Ascending aorta (tissue), 2 donors: ENCODE measurements at regions of chr9 and their contacts with region 1.

Region 1: GRCh38 chr9:4984621-4985385 is at the start of gene JAK2:
- DNase-seq: peak; percentile 77 to 96
- H3K4me3 ChIP-seq: peak within 1 kb of the TSS; percentile 73 to 83
- H3K27ac ChIP-seq: peak within 1 kb of the TSS; percentile 96 to 97
- H3K4me1 ChIP-seq: peaks cover 4 to 37% of the 10 kb centered on the region in 2 donors
- H3K27me3 ChIP-seq: no peaks in the 10 kb centered on the region
- CTCF ChIP-seq: peak in 2 of 3 experiments; percentile 29 to 41
- total RNA-seq, gene JAK2: 31.9 TPM

Region 2: DNA sequence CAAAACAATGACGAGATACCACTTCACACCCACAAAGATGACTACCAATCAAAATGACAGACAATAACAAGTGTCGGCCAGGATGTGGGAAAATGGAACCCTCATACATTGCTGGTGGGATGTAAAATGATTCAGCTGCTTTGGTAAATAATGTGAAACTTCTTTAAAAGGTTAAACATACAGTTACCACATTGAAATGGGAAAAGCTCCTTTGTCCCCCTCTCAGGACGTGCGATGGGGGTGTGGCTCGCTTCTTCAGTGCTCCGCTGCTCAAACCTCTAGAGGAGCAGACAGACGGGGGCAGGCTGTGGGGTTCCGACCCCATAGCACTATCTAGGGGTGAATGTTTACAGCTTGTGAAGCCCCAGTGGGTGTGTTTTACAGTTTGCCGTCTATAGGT is 330.7 kb before region 1 on chr9:
- intact Hi-C with region 1: no loop called
- DNase-seq: no peak
- H3K4me3 ChIP-seq: no peak overlapping the region
- H3K27ac ChIP-seq: no peak overlapping the region
- H3K4me1 ChIP-seq: no peaks in the 10 kb centered on the region
- H3K27me3 ChIP-seq: no peaks in the 10 kb centered on the region
- CTCF ChIP-seq: no peak

Region 3: DNA sequence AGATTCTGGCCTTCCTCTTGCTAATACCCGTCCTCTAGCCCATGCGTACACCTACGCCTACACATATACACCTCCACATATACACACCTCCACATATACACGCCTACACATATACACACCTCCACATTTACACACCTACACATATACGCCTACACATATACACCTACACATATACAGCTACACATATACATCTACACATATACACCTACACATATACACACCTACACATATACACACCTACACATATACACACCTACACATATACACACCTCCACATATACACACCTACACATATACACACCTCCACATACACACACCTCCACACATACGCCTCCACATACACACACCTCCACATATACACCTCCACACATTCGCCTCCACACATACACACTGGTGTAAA is 271.0 kb before region 1 on chr9:
- intact Hi-C with region 1: no loop called
- DNase-seq: no peak
- H3K4me3 ChIP-seq: no peak overlapping the region
- H3K27ac ChIP-seq: no peak overlapping the region
- H3K4me1 ChIP-seq: no peaks in the 10 kb centered on the region
- H3K27me3 ChIP-seq: no peaks in the 10 kb centered on the region
- CTCF ChIP-seq: no peak

Region 4: GRCh38 chr9:4762108-4762885 is 222.5 kb before region 1 on chr9:
- intact Hi-C with region 1: loop called (anchors 1 kb)
- DNase-seq: peak in 1 of 2 donors; percentile 86
- H3K4me3 ChIP-seq: peak overlapping the region; percentile 37 to 38
- H3K27ac ChIP-seq: peak overlapping the region; percentile 9 to 36
- H3K4me1 ChIP-seq: peaks cover 0 to 2% of the 10 kb centered on the region in 2 donors
- H3K27me3 ChIP-seq: no peaks in the 10 kb centered on the region
- CTCF ChIP-seq: peak; percentile 72 to 78 (median 78)

Region 5: DNA sequence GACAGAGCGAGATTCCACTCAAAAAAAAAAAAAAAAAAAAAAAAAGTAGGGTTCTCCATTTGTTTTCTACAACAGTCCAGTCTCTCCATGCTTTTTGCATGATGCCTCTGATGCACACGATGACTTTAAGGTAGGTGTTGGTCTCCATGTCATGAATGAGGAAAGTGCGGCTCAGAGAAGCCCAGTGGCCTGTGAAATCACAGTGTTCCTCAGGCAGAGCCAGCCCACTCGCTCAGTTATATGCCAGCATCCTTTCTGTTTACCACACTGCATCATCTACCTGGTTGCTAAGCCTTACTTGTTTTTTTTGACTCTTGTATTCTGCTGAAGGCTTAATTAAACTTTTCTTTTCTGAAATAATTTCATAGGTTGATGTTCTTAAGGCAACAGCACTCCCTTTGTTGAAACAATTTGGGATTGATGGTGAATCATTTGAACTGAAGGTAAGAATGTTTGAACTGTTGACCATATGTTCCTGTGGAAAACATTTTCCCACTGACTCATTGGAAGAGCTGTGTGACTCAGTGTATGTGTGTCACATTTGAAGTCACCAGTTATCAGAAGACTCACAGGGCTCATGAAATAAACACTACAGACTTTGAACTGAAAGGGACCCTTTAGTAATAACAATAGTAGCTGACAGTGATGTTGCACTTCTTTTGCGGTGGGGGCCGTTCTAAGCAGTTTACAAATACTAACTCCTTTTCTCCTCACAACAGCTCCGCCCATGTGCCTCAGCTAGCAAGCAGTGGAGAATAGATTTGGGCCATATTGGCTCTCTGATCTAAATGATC is 151.8 kb before region 1 on chr9:
- intact Hi-C with region 1: loop called (anchors 5 kb)
- DNase-seq: no peak
- H3K4me3 ChIP-seq: no peak overlapping the region
- H3K27ac ChIP-seq: peak overlapping the region in 1 of 2 donors; percentile 19
- H3K4me1 ChIP-seq: peaks cover 4 to 26% of the 10 kb centered on the region in 2 donors
- H3K27me3 ChIP-seq: no peaks in the 10 kb centered on the region
- CTCF ChIP-seq: no peak

Region 6: DNA sequence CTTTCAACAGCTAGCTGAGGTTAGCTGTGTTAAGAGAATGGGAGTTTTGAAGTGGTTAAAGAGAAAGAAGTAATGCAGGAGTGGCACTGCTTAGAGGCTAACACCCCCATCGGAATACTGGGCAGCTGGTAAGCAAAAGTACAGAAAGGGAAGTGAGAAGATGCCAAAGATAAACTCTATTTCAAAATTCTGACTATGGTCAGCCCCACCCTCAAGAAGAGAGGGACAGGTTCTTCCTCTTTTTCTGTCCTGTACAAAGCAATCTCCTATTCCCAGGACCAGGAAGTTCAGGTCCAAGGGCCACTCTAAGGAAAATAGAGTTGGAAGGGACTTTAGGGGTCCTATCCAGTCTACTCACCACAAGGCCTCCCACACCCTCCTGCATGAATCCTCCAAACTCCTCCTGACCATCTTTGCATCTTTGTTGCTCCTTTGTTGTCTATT is 45.7 kb before region 1 on chr9:
- intact Hi-C with region 1: loop called (anchors 1 kb)
- DNase-seq: no peak
- H3K4me3 ChIP-seq: no peak overlapping the region
- H3K27ac ChIP-seq: peak overlapping the region; percentile 61 to 65
- H3K4me1 ChIP-seq: peaks cover 4 to 36% of the 10 kb centered on the region in 2 donors
- H3K27me3 ChIP-seq: no peaks in the 10 kb centered on the region
- CTCF ChIP-seq: no peak

Region 7: DNA sequence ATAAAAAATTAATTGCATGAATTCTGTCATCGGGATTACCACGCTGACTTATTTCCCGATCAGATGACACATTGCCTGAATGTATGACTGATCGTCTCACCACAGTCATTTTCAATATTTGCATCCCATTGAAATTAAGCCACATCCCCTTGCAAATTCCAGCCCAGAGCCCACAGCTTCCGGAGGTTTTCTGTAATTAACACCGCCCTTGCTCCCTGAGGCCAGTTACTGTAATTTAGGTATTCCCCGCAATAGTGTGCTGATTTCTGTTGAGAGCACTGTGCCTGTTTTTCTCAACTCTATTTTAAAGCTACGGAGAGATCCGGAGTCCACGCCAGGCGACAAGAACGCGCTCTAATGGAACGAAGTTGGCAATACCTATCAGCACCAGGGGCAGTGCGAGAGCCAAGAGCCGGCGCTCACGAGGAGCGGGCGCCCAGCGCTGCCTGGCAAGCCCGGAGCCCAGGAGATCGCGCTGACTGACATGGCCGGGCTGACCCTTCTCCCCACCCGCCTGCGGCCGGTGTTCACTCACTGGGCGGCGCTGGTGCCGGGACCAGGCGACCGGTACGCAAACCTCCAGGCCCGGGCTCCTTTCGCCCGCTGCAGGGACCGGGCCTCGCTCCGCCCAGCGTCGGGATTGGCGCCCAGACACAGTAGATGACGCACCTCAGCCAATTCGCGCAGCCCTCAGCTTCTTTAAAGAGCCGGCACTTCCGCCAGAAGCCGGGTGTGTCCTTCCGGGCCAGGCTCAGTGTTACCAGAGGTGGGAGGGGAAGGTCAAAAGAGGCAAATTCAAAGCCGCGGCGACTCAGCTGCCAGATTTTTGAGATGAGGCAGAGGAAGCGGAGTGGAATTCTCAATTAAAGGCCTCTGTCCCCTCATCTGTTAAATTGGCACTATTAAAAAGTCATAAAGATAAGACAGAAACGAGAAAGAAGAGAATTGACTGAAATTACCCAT is 452.7 kb after region 1 on chr9 and contains the start of gene PLGRKT:
- intact Hi-C with region 1: loop called (anchors 5 kb)
- DNase-seq: peak; percentile 85 to 98
- H3K4me3 ChIP-seq: peak within 1 kb of the TSS; percentile 75 to 77
- H3K27ac ChIP-seq: peak within 1 kb of the TSS; percentile 91 to 93
- H3K4me1 ChIP-seq: peaks cover 0 to 9% of the 10 kb centered on the region in 2 donors
- H3K27me3 ChIP-seq: no peaks in the 10 kb centered on the region
- CTCF ChIP-seq: peak in 2 of 3 experiments; percentile 25 to 39
- total RNA-seq, gene PLGRKT: not detected